Caco-2 (cell line): ENCODE measurements at regions of chr2 and their contacts with region 1.

Region 1: GRCh38 chr2:235005603-235006259 is 53.9 kb downstream of the SH3BP4 start:
- DNase-seq: peak; percentile 56 to 59
- H3K4me3 ChIP-seq: no peak overlapping the region
- H3K4me3 Mint-ChIP-seq: peak overlapping the region; percentile 40
- H3K27ac Mint-ChIP-seq: peak overlapping the region; percentile 52
- H3K4me1 ChIP-seq: peaks cover 89% of the 10 kb centered on the region
- H3K4me1 Mint-ChIP-seq: peaks cover 40% of the 10 kb centered on the region
- H3K27me3 ChIP-seq: no peaks in the 10 kb centered on the region
- H3K27me3 Mint-ChIP-seq: no peaks in the 10 kb centered on the region
- CTCF ChIP-seq: peak in 1 of 2 experiments; percentile 19

Region 2: DNA sequence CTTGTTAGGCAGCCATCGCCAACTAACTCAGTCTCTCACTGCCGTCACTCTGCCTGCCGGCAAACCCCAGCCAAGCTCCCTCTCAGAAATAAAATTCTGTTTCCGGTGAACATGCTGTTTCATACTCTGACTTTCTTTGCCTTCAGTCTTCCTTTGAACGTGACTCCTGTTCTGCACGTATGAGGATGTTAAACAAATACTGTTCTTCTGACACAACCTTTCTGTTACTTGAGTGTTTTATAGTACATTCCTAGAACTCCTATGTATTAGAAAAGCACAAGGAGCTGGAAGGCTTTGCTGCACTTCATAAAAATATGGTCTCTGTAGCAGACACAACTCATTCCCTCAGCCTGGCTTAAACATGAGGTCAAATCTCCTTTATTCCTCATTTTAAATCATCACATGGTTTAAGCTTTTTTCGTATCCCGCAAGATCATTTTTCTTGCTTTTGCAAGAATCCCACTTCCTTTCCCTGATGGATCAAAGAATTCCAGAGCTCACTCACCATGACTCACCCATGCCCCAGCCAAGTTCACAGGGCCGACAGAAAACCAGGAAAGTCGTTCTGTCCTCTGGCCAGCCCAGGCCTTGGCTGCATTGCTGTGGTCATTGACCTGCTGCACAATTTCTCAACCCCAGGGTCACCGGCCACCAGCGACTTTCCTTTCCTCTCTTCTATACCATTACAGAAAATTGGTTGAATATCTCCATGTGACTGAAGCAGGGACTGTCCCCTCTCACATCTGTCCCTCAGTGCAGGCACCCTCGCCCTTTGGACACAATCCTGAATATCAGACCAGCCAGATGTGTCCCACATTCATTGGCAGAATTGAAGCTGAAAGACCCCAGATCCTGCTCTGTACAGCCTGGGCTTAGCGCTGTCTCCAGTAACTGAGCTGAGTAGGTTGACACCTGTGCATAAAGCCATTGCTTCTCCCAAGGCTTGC is 325.7 kb before region 1 on chr2:
- CTCF ChIA-PET with region 1: no interaction called
- POLR2A ChIA-PET with region 1: no interaction called
- intact Hi-C with region 1: loop called (anchors 5 kb)
- DNase-seq: no peak
- H3K4me3 ChIP-seq: no peak overlapping the region
- H3K4me3 Mint-ChIP-seq: no peak overlapping the region
- H3K27ac Mint-ChIP-seq: no peak overlapping the region
- H3K4me1 ChIP-seq: peaks cover 15% of the 10 kb centered on the region
- H3K4me1 Mint-ChIP-seq: peaks cover 7% of the 10 kb centered on the region
- H3K27me3 ChIP-seq: no peaks in the 10 kb centered on the region
- H3K27me3 Mint-ChIP-seq: no peaks in the 10 kb centered on the region
- CTCF ChIP-seq: no peak